Right cardiac atrium (tissue), 5 donors: ENCODE measurements at regions of chr4 and their contacts with region 1.

Region 1: DNA sequence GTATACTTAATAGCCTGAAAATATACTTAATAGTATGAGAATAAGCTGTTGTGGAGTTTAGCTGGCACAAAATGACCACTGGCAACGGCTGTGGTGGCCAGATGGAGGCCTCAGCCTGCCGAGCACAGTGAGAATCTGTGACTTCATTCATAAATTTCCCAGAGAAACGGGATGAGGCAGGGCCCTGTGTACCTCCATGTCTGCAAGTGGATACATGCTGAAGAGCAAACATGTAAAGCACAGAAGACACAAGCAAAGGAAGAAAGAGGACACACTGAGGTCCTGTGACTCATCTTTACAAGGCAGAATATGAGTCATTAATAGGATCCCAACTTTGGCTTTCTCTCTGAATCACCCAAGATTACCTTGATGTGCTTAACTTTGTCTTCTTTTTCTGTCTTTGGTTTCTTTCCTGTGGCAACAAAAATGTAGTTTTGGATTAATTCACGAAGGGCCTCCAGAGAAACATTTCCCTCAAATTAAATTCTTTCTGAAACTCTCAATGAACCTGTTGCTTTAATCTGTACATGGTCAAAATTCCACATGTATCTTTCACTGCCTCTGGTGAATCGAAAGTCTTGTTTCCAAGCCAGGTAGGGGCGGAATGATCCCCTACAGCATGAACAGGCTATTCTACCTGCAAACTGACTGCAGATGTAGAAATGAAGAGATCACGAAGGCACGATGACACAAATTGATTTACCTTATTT is 56.4 kb downstream of the IRF2 start:
- DNase-seq: peak in 1 of 3 donors; percentile 71
- ATAC-seq: peak; percentile 32 to 43
- H3K4me3 ChIP-seq: no peak overlapping the region
- H3K27ac ChIP-seq: no peak overlapping the region
- H3K4me1 ChIP-seq: peaks cover 17% of the 10 kb centered on the region
- H3K27me3 ChIP-seq: no peaks in the 10 kb centered on the region

Region 2: DNA sequence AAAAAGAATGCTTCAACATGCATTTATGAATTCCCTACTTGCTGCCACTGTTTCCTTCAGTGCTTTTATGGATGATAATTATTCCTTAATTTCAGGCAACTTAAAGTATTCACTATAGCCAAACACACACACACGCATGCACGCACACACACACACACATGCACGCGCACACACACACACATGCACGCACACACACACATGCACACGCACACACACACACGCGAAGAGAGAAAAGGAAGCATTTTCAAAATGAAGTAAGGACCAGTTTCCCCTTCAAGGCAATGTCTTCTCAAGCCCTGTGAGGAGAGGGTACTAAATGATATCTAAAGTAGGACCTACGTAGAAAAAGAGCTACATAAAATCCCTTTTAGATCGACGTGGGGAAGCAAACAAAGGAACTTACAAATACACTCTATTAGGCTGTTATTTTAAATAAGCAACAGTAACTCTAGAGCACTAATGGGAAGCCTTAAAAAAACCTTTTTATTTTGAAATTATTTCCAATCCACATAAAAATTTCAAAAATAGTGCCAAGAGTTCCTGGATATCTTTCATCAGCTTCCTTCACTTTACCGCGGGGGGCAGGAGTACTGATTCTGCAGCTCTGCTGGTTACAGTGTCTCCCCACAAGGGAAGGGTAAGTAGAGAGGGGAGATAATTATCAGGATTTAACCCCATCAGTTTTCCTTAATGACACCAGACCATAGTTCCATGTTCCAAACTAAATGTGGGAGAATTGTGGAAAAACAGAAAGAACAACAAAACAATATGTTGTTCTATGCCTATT is 42.7 kb after region 1 on chr4:
- intact Hi-C with region 1: loop called in 1 of 4 experiments (anchors 10 kb)
- DNase-seq: no peak
- ATAC-seq: no peak
- H3K4me3 ChIP-seq: no peak overlapping the region
- H3K27ac ChIP-seq: no peak overlapping the region
- H3K4me1 ChIP-seq: peaks cover 17% of the 10 kb centered on the region
- H3K27me3 ChIP-seq: no peaks in the 10 kb centered on the region

Region 3: GRCh38 chr4:184481544-184481943 is 63.6 kb after region 1 on chr4:
- intact Hi-C with region 1: no loop called
- DNase-seq: no peak
- ATAC-seq: no peak
- H3K4me3 ChIP-seq: no peak overlapping the region
- H3K27ac ChIP-seq: no peak overlapping the region
- H3K4me1 ChIP-seq: peaks cover under 1% of the 10 kb centered on the region
- H3K27me3 ChIP-seq: no peaks in the 10 kb centered on the region

Region 4: GRCh38 chr4:184762100-184762499 is 344.1 kb after region 1 on chr4:
- intact Hi-C with region 1: no loop called
- DNase-seq: no peak
- ATAC-seq: no peak
- H3K4me3 ChIP-seq: no peak overlapping the region
- H3K27ac ChIP-seq: no peak overlapping the region
- H3K4me1 ChIP-seq: no peaks in the 10 kb centered on the region
- H3K27me3 ChIP-seq: no peaks in the 10 kb centered on the region

Region 5: DNA sequence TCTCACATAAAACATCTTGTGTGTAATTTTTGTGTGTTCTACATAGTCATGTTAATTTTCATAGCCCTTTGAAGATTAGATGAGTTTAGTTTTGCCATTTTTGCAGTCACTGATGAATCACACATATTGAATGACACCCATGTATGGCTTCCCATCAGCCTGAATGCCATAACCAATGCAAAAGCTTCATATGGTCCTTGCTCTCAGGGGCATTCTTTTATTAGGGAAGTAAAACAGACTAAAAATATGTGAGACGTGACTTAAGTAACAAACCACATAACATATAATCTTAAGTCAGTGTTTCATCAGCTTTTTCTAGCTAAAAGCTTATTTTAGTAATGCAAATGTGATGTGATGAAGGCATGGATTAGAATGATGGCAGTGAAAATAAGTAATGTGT is 733.3 kb after region 1 on chr4:
- intact Hi-C with region 1: no loop called
- DNase-seq: no peak
- ATAC-seq: no peak
- H3K4me3 ChIP-seq: no peak overlapping the region
- H3K27ac ChIP-seq: no peak overlapping the region
- H3K4me1 ChIP-seq: no peaks in the 10 kb centered on the region
- H3K27me3 ChIP-seq: no peaks in the 10 kb centered on the region